PC-9 (cell line): ENCODE measurements at regions of chr13 and their contacts with region 1.

Region 1: GRCh38 chr13:87376081-87376480 is 295.1 kb upstream of the SLITRK5 start:
- DNase-seq: peak in 1 of 2 experiments; percentile 37
- H3K4me3 ChIP-seq: no peak overlapping the region
- H3K27ac ChIP-seq: no peak overlapping the region
- H3K4me1 ChIP-seq: no peaks in the 10 kb centered on the region
- H3K27me3 ChIP-seq: no peaks in the 10 kb centered on the region
- CTCF ChIP-seq: no peak

Region 2: GRCh38 chr13:86906127-86906874 is 469.8 kb before region 1 on chr13:
- CTCF ChIA-PET with region 1: interaction called, 10 read pairs
- POLR2A ChIA-PET with region 1: no interaction called
- intact Hi-C with region 1: no loop called
- DNase-seq: no peak
- H3K4me3 ChIP-seq: no peak overlapping the region
- H3K27ac ChIP-seq: no peak overlapping the region
- H3K4me1 ChIP-seq: no peaks in the 10 kb centered on the region
- H3K27me3 ChIP-seq: no peaks in the 10 kb centered on the region
- CTCF ChIP-seq: no peak

Region 3: DNA sequence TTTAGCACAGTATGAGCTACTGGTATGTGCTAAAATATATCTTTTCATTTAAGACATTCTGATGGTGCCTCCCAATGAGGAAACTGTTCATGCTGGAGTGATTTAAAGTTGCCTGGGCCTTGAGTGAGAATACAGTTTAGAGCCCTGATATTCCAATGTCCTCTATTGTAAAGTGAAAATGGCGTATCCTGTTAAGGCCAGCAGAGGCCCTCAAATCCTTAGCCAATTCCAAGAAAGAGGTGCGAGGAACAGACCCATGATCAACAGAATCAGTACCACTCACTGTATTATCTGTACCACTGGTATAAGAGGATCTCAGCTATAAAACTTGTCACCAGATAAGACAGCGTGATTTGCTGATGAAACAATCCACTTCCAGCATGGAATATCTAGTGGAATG is 22.0 kb after region 1 on chr13:
- CTCF ChIA-PET with region 1: no interaction called
- POLR2A ChIA-PET with region 1: interaction called, 30 read pairs
- intact Hi-C with region 1: no loop called
- DNase-seq: no peak
- H3K4me3 ChIP-seq: no peak overlapping the region
- H3K27ac ChIP-seq: no peak overlapping the region
- H3K4me1 ChIP-seq: no peaks in the 10 kb centered on the region
- H3K27me3 ChIP-seq: no peaks in the 10 kb centered on the region
- CTCF ChIP-seq: no peak

Region 4: DNA sequence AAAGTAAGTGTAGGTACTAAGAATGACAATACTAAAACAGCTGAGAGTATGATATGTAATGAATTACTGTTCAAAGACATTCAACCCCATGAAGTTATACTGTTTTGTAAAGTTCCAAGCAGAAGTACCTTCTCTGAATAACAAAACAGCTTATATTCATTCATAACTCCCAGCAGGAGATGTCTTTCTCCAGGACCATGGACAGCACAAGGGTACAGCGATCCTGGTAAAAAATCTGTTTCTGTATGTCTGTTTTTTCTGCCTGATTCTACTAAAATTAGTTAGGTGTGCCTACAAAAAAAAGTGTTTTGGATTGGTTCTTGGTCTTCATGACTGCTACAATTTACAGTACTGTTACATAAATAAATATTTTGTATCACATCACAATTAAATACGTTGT is 122.6 kb after region 1 on chr13:
- CTCF ChIA-PET with region 1: no interaction called
- POLR2A ChIA-PET with region 1: no interaction called
- intact Hi-C with region 1: no loop called
- DNase-seq: peak in 1 of 2 experiments; percentile 1
- H3K4me3 ChIP-seq: no peak overlapping the region
- H3K27ac ChIP-seq: no peak overlapping the region
- H3K4me1 ChIP-seq: no peaks in the 10 kb centered on the region
- H3K27me3 ChIP-seq: no peaks in the 10 kb centered on the region
- CTCF ChIP-seq: no peak